ENCODE measurements at regions of chr18 and their contacts with region 1.

Region 1: DNA sequence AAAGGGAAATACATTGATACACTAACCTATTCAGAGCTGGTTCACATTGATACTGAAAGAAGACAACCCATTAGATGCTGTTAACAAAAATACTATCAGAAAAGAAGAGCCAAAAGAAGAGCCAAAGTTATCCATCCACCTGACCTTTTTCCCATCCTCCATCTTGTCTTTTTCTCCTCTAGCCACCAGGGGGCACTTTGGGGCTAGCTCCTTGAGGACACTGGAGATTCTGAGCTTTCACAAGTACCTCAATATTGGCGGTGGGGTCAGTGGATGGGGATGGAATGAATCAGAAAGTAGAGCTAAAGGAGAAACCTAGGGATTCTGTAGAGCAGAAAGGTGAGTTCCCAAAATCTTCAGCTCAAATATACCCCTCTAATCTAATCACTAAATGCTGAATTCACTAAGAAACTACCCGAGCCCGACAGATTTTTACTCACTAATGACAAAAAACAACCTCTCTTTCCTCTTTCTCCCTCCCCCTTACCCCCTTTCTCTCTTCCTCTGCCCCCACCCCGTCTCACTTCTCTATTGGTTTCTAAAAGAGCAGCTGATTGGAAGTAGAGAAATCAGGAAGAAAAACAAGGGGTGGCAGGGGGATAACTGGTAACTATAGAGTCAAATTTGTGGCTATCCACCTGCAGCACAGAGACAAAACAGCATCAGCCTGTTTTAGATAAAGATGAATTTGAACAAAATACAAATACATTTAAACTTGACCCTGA is 203.3 kb downstream of the TCF4 start:
- DNase-seq: peak; percentile 10 to 72
- H3K4me3 ChIP-seq: no peak overlapping the region
- H3K27ac ChIP-seq: no peak overlapping the region
- H3K4me1 ChIP-seq: peaks cover 0 to 3% (median 1%) of the 10 kb centered on the region in 4 experiments; a peak in 3 of 7 replicates
- H3K27me3 ChIP-seq: no peaks in the 10 kb centered on the region
- CTCF ChIP-seq: peak; percentile 47 to 85 (median 60)
- EP300 ChIP-seq: no peak
- POLR2A ChIP-seq: no peak
- RAD21 ChIP-seq: peak; percentile 79 to 83

Region 2: DNA sequence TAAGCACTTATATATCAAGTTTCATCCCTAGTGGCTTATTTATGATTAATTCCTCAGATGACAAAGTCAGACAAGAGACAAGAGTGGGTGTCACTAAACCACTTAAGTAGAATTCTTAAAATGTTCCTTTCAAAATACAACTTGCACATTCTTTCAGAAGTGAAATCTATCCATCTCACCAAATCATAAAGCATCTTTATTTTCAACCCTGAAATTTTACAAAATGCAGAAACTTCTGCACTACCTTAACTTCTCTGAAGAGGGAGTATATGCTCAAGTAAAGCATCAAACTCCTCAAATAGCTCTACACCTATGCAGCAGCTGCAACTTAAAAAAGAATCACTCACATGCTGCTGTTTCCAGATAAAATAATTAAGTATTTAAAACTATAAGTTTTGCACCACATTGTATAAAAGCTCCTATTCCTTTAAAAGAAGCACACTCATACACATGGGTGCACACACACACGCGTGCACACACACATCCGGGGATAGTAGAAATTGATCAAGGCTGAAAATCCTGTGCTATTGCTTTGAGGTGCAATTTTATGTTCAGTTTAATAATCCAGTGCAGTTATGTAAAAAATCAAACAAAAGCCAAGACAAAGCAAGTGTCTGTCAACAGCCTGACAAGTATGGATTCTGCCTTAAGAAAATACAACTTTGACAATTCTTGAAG is 41.2 kb before region 1 on chr18:
- CTCF ChIA-PET with region 1: interaction called, 12 read pairs
- POLR2A ChIA-PET with region 1: no interaction called
- DNase-seq: no peak
- H3K4me3 ChIP-seq: no peak overlapping the region
- H3K27ac ChIP-seq: no peak overlapping the region
- H3K4me1 ChIP-seq: peaks cover 6 to 16% (median 13%) of the 10 kb centered on the region in 4 experiments
- H3K27me3 ChIP-seq: no peaks in the 10 kb centered on the region
- CTCF ChIP-seq: peak in 2 of 3 experiments; percentile 10 to 50; a peak in 2 of 4 replicates
- EP300 ChIP-seq: no peak
- POLR2A ChIP-seq: no peak
- RAD21 ChIP-seq: peak; percentile 65 to 67

Region 3: DNA sequence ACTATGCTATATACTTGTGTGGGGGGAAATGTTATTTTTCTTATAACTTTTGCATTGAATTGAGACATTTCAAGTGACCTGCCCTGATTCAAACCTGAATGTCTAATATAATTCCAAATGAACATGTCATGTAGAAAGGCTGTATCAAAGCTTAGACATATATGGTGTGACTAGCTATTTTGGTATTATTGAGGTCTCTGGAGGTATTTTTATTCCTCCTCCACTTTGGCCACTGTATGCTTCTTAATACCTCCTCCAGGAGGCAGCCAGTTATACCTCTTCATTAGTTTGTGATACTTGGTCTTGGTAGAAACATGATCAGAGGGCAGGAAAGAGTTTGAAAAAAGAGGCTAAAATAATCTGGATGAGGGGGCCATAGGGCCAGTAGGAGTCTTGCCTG is 13.8 kb before region 1 on chr18:
- CTCF ChIA-PET with region 1: interaction called, 10 read pairs
- POLR2A ChIA-PET with region 1: no interaction called
- DNase-seq: no peak
- H3K4me3 ChIP-seq: no peak overlapping the region
- H3K27ac ChIP-seq: no peak overlapping the region
- H3K4me1 ChIP-seq: peaks cover 0 to 5% (median 0%) of the 10 kb centered on the region in 4 experiments; a peak in 1 of 7 replicates
- H3K27me3 ChIP-seq: no peaks in the 10 kb centered on the region
- CTCF ChIP-seq: no peak
- EP300 ChIP-seq: no peak
- POLR2A ChIP-seq: no peak
- RAD21 ChIP-seq: no peak

Region 4: GRCh38 chr18:55395799-55396198 is 11.1 kb after region 1 on chr18:
- CTCF ChIA-PET with region 1: interaction called, 37 read pairs
- POLR2A ChIA-PET with region 1: interaction called, 3 read pairs
- DNase-seq: no peak
- H3K4me3 ChIP-seq: no peak overlapping the region
- H3K27ac ChIP-seq: no peak overlapping the region
- H3K4me1 ChIP-seq: peaks cover 0 to 8% (median 4%) of the 10 kb centered on the region in 4 experiments; a peak in 4 of 7 replicates
- H3K27me3 ChIP-seq: no peaks in the 10 kb centered on the region
- CTCF ChIP-seq: no peak
- EP300 ChIP-seq: no peak
- POLR2A ChIP-seq: no peak
- RAD21 ChIP-seq: no peak

Measured in H1 (cell line).